Vagina (tissue), 2 donors: ENCODE measurements at regions of chr6 and their contacts with region 1.

Region 1: GRCh38 chr6:35601331-35602132 is 87.2 kb downstream of the FKBP5 start:
- DNase-seq: peak in 1 of 2 donors; percentile 96
- H3K4me3 ChIP-seq: peak overlapping the region; percentile 9 to 17
- H3K27ac ChIP-seq: peak overlapping the region; percentile 96
- H3K4me1 ChIP-seq: peaks cover 91% of the 10 kb centered on the region
- H3K27me3 ChIP-seq: no peaks in the 10 kb centered on the region
- CTCF ChIP-seq: no peak
- POLR2A ChIP-seq: peak in 1 of 2 donors; percentile 15

Region 2: DNA sequence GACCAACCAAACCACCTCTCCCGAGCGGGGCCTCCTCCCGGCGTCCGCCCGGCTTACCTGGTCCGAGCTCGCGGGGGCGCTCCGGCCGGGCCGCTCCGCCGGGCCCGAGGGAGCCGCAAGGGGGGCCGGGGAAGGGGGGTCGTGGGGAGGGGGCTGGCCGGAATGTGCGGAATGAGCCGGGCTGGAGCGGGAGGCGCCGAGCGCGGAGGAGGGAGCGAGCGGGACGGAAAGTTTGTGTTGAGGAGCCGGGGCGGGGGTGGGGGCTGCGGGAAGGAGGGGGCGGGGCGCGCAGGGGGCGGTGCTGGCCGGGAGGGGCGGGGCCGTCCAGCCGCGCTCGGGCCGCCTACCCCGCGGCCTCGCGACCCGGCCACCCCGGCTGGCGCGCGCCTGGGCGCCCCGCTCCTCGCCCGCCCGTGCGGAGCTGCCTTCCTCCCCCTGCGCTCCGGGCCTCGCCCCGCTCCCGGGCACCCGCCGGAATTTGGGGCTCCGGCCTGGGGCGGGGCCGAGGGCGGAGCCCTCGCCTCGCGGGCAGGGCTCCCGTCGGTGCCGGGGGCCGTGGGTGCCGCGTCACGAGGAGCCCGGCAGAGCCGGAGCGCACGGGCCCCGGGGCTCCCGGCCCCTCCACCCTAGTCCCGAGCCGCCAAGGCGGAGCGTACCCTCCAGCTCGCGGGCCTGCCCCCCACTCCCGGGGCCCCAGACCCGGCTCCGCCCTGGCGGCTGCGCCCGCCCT is 104.5 kb before region 1 on chr6 and contains the start of gene TEAD3:
- intact Hi-C with region 1: loop called (anchors 5 kb)
- DNase-seq: no peak
- H3K4me3 ChIP-seq: peak within 1 kb of the TSS; percentile 67 to 92
- H3K27ac ChIP-seq: peak within 1 kb of the TSS; percentile 97
- H3K4me1 ChIP-seq: peaks cover 51% of the 10 kb centered on the region
- H3K27me3 ChIP-seq: no peaks in the 10 kb centered on the region
- CTCF ChIP-seq: peak in 1 of 3 experiments; percentile 22
- POLR2A ChIP-seq: peak in 1 of 2 donors; percentile 82
- total RNA-seq, gene TEAD3: 29.0 TPM

Region 3: DNA sequence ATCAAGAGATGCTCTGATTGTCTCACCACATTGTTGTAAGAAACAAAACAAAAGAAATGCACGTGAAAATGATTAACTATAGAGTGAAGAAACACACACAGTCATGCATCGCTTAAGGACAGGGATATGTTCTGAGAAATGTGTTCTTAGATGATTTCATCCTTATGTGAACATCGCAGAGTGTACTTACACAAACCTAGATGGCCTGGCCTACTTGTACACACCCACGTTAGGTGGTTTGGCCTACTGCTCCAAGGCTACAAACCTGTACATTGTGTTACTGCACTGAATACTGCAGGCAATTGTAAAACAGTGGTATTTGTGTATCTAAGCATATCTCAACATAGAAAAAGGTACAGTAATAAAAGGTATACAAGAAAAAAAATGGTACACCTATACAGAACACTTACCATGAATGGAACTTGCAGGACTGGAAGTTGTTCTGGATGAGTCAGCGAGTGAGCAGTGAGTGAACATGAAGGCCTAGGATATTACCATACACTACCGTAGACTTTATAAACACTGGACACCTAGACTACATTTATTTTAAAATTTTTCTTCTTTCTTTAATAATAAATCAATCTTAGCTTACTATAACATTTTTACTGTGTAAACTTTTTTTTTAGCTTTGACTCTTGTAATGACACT is 38.6 kb after region 1 on chr6:
- intact Hi-C with region 1: no loop called
- DNase-seq: no peak
- H3K4me3 ChIP-seq: no peak overlapping the region
- H3K27ac ChIP-seq: no peak overlapping the region
- H3K4me1 ChIP-seq: peaks cover 14% of the 10 kb centered on the region
- H3K27me3 ChIP-seq: no peaks in the 10 kb centered on the region
- CTCF ChIP-seq: no peak
- POLR2A ChIP-seq: no peak

Region 4: DNA sequence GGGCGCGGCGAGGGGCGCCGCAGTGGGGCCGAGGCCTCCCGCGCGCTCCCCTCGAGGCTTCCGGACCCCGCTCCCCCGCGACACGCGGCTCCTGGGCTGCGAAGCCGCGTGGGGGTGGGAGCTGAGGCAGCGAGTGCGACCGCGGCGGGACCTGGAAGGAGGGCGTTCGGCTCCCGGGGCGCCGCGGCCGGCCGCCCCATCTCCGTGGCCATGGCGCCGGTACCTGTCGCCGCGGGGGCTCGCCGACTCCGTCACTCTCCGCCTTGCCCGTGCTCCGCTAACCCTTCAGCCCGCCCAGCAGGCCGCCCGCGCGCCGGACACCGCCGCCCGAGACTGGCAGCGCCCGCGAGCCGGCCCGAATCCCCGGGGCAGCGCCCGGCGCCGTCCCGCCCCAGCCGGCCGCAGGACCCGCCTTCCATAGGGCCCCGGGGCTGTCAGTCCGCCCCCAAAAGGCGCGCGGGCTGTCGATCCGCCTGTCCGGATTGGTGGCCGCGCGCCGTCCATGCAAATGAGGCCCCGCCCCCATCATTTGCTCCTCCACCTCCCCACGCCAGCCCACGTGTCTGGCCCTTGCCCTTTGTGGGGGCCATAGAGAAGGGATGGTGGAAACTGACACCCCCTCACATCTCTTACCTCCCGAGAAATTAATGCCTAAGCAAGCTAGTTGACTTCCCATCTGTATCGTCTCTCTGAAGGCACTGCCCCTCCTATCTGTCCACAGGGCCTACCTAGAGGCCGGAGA is 87.2 kb after region 1 on chr6 and contains the start of gene FKBP5:
- intact Hi-C with region 1: loop called (anchors 5 kb)
- DNase-seq: peak in 1 of 2 donors; percentile 96
- H3K4me3 ChIP-seq: peak within 1 kb of the TSS; percentile 97 to 99
- H3K27ac ChIP-seq: peak within 1 kb of the TSS; percentile 99
- H3K4me1 ChIP-seq: peaks cover 15% of the 10 kb centered on the region
- H3K27me3 ChIP-seq: no peaks in the 10 kb centered on the region
- CTCF ChIP-seq: peak in 1 of 3 experiments; percentile 9
- POLR2A ChIP-seq: peak; percentile 98
- total RNA-seq, gene FKBP5: 246 TPM